Brain microvascular endothelial cell (primary cell): ENCODE measurements at regions of chr11 and their contacts with region 1.

Region 1: DNA sequence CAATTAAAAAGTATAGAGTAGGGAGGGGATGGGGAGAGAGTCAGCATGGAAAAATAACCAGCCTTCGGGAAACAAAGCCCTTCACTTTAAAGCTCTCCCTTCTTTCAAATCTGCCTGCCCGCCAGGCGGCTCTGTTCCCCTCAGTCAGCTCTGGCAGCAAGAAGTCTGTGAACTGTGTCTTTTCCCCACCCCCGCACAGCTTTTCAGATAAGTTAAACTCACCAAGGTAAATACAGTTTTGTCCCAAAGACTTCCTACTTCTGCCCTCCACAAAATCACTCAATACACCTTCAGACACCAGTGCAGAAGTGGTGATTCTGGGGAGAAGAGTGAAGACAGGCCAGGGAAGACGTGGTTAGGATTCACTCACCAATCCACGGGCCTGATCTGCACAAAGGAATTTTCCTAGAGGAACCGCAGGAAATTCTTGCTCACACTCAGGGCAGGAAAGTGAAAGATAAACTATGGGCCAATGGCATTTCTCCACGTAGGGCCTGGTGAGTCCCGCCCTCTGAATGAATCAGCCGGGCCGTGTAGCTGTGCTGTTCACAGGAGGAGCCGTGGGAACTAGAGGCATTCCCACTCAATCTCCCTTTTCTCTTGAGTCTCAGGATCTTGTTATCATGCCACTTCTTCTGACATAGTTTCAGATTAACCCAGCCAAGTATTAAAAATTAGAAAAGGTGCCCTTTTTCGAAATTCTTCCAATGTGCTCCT is at the start of gene TRIM5:
- DNase-seq: peak; percentile 99
- H3K4me3 ChIP-seq: peak within 1 kb of the TSS; percentile 59
- H3K27ac ChIP-seq: peak within 1 kb of the TSS; percentile 98
- H3K27me3 ChIP-seq: no peaks in the 10 kb centered on the region
- CTCF ChIP-seq: peak; percentile 80

Region 2: GRCh38 chr11:5564259-5565019 is 120.4 kb before region 1 on chr11:
- in situ Hi-C with region 1: no loop called
- DNase-seq: peak; percentile 10
- H3K4me3 ChIP-seq: no peak overlapping the region
- H3K27ac ChIP-seq: no peak overlapping the region
- H3K27me3 ChIP-seq: no peaks in the 10 kb centered on the region
- CTCF ChIP-seq: no peak

Region 3: GRCh38 chr11:5596607-5597201 is 88.1 kb before region 1 on chr11 and contains the start of gene TRIM6:
- in situ Hi-C with region 1: loop called (anchors 25 kb)
- DNase-seq: peak; percentile 22
- H3K4me3 ChIP-seq: peak within 1 kb of the TSS; percentile 59
- H3K27ac ChIP-seq: peak within 1 kb of the TSS; percentile 77
- H3K27me3 ChIP-seq: no peaks in the 10 kb centered on the region
- CTCF ChIP-seq: no peak